ENCODE measurements at regions of chr12 and their contacts with region 1.

Region 1: GRCh38 chr12:113152835-113153814 is 3.6 kb downstream of the CFAP73 start:
- DNase-seq: peak; percentile 83
- ATAC-seq: peak; percentile 83
- H3K4me3 Mint-ChIP-seq: peak overlapping the region; percentile 72
- H3K27ac Mint-ChIP-seq: peak overlapping the region; percentile 73
- H3K4me1 Mint-ChIP-seq: peaks cover 28% of the 10 kb centered on the region
- H3K27me3 Mint-ChIP-seq: peaks cover 21% of the 10 kb centered on the region
- CTCF ChIP-seq: peak; percentile 51

Region 2: DNA sequence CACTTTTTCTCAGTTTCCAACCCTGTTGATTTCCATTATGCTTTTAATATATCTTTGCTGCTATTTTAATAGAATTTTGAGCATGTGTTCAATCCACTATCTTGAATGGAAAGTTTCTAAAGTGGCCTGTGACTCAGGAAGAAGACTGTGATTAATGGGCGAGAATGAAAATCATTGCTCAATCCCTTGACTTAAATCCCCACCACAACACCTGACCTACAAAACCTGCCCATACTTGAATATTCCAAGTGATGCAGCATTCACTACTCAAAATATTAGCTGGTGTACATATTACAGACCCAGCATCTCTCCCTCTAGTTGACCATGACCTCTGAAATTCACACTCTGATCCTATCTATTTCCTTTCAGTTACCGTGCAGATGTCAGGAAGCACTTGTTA is 216.2 kb before region 1 on chr12:
- CTCF ChIA-PET with region 1: no interaction called
- POLR2A ChIA-PET with region 1: no interaction called
- intact Hi-C with region 1: no loop called
- DNase-seq: no peak
- ATAC-seq: no peak
- H3K4me3 Mint-ChIP-seq: no peak overlapping the region
- H3K27ac Mint-ChIP-seq: peak overlapping the region; percentile 2
- H3K4me1 Mint-ChIP-seq: peaks cover 28% of the 10 kb centered on the region
- H3K27me3 Mint-ChIP-seq: no peaks in the 10 kb centered on the region
- CTCF ChIP-seq: no peak

Region 3: GRCh38 chr12:113135178-113136127 is 17.7 kb before region 1 on chr12 and contains the start of gene RASAL1:
- CTCF ChIA-PET with region 1: interaction called, 21 read pairs
- POLR2A ChIA-PET with region 1: interaction called, 12 read pairs
- intact Hi-C with region 1: no loop called
- DNase-seq: peak; percentile 95
- ATAC-seq: peak; percentile 91
- H3K4me3 Mint-ChIP-seq: peak within 1 kb of the TSS; percentile 66
- H3K27ac Mint-ChIP-seq: peak within 1 kb of the TSS; percentile 86
- H3K4me1 Mint-ChIP-seq: peaks cover 18% of the 10 kb centered on the region
- H3K27me3 Mint-ChIP-seq: no peaks in the 10 kb centered on the region
- CTCF ChIP-seq: peak; percentile 88
- total RNA-seq, gene RASAL1: 9.8 to 12.4 TPM